ENCODE measurements at regions of chr5 and their contacts with region 1.

Region 1: DNA sequence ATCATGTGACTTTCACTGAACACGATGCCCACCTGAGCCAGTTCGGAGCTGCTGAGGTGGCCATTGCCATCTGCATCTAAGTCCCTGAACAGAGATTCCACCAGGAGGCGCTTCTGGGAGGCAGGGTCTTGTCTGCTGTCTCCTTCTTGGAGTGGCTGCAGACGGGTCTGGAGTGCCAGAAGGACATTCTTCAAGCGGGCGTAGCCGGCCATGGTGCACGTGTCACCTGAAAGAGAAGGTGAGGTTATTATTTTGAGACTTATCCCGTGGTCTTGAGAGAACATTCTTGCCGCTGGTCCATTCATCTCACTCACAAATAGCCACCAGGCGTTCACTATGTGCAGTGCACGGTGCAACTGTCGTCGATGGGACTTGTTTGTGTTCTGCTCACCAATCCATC is 264.6 kb downstream of the HSPA4 start:
- DNase-seq: peak; percentile 74
- ATAC-seq: peak; percentile 81
- H3K4me3 Mint-ChIP-seq: no peak overlapping the region
- H3K27ac Mint-ChIP-seq: no peak overlapping the region
- H3K4me1 Mint-ChIP-seq: peaks cover 31% of the 10 kb centered on the region
- H3K27me3 Mint-ChIP-seq: no peaks in the 10 kb centered on the region; the same call in 1 of the 2 replicates
- CTCF ChIP-seq: no peak

Region 2: DNA sequence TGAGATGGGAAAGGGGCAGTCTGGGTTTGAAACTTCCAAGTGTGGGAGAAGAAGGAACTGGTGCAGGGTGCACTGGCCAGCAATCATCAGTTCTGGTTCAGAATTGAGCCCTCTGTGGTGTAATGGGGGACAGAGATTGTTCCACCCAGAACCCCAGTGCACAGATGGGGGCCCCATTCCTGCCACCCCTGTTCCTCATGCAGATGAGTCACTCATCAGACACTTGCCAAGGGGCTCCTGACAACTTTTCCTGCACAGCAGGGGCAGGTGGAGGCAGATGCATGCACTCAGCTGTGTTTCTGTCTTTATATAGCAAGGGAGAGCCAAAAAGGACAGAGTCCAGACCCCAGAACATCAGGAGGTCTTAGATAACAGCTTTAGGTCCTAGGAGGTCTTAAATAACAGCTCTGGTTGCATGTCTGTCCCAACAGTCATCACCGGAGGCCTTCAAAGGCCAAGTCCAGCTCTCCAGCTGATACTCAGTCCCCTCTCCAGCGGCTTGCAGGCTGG is 11.7 kb before region 1 on chr5:
- CTCF ChIA-PET with region 1: interaction called, 12 read pairs
- POLR2A ChIA-PET with region 1: no interaction called
- DNase-seq: no peak
- ATAC-seq: no peak
- H3K4me3 Mint-ChIP-seq: no peak overlapping the region
- H3K27ac Mint-ChIP-seq: no peak overlapping the region
- H3K4me1 Mint-ChIP-seq: peaks cover 11% of the 10 kb centered on the region
- H3K27me3 Mint-ChIP-seq: no peaks in the 10 kb centered on the region; the same call in 1 of the 2 replicates
- CTCF ChIP-seq: no peak

Region 3: GRCh38 chr5:133331941-133332340 is 15.5 kb after region 1 on chr5:
- CTCF ChIA-PET with region 1: interaction called, 20 read pairs
- POLR2A ChIA-PET with region 1: no interaction called
- DNase-seq: no peak
- ATAC-seq: no peak
- H3K4me3 Mint-ChIP-seq: no peak overlapping the region
- H3K27ac Mint-ChIP-seq: no peak overlapping the region
- H3K4me1 Mint-ChIP-seq: peaks cover 63% of the 10 kb centered on the region
- H3K27me3 Mint-ChIP-seq: peaks cover 60% of the 10 kb centered on the region
- CTCF ChIP-seq: no peak

Region 4: DNA sequence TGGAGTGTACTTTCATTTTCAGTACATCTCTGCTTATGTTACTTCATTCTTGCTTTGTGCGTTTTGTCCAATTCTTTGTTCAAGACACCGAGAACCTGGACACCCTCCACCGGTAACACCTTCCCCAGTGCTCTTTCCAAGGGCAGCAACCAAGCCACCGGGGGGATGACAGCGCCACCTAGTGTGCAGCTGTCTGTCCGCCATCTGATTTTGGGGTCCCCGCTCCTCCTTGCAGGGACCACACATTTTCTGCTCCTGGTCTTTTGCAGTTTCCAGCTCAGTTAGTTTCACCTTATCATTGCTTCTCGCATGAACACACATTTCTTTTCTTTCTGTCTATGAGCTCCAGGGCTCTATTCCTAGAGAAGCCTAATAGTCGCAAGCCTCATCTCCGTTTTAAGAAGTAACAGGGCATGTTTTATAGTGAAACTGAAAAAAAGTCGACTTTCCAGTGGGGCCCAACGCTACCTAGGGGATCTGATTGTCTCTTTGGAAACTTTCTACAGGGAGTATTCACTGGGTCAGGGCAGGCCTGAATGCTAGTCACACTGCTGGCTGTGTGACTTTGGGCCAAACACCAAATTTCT is 143.8 kb after region 1 on chr5:
- CTCF ChIA-PET with region 1: interaction called, 11 read pairs
- POLR2A ChIA-PET with region 1: no interaction called
- DNase-seq: peak; percentile 80
- ATAC-seq: peak; percentile 85
- H3K4me3 Mint-ChIP-seq: no peak overlapping the region
- H3K27ac Mint-ChIP-seq: no peak overlapping the region
- H3K4me1 Mint-ChIP-seq: peaks cover 20% of the 10 kb centered on the region
- H3K27me3 Mint-ChIP-seq: no peaks in the 10 kb centered on the region
- CTCF ChIP-seq: peak; percentile 93

Region 5: DNA sequence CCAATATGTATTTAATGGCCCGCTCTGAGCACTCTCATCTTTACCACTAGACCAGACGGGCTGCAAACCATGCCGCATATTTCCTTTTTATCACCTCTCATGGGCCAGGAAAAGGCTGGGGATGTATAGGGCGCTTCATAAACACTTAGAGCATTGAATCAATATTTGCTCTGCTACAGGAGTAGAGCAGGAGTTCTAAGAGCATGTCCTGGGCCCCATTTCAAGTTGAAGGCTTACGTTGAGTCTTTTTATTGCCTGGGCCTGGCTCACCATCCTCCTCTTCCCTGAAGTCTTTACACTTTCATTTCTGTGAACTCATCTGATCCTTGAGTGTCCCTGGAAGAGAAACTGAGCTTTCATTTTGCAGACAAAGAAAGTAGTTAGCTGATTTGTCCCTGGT is 183.5 kb after region 1 on chr5:
- CTCF ChIA-PET with region 1: no interaction called
- POLR2A ChIA-PET with region 1: no interaction called
- DNase-seq: no peak
- ATAC-seq: no peak
- H3K4me3 Mint-ChIP-seq: no peak overlapping the region
- H3K27ac Mint-ChIP-seq: no peak overlapping the region
- H3K4me1 Mint-ChIP-seq: peaks cover 8% of the 10 kb centered on the region
- H3K27me3 Mint-ChIP-seq: no peaks in the 10 kb centered on the region
- CTCF ChIP-seq: no peak

Measured in WTC11 (cell line).